ENCODE measurements at regions of chr16 and their contacts with region 1.

Region 1: GRCh38 chr16:31265329-31266245 is 5.8 kb downstream of the ITGAM start:
- DNase-seq: peak; percentile 91
- ATAC-seq: peak; percentile 97
- H3K4me3 Mint-ChIP-seq: peak overlapping the region; percentile 10
- H3K27ac Mint-ChIP-seq: peak overlapping the region; percentile 86
- H3K4me1 Mint-ChIP-seq: peaks cover 40% of the 10 kb centered on the region
- H3K27me3 Mint-ChIP-seq: peaks cover 6% of the 10 kb centered on the region

Region 2: GRCh38 chr16:31134625-31135547 is 130.7 kb before region 1 on chr16:
- CTCF ChIA-PET with region 1: no interaction called
- POLR2A ChIA-PET with region 1: no interaction called
- intact Hi-C with region 1: no loop called
- DNase-seq: no peak
- ATAC-seq: no peak
- H3K4me3 Mint-ChIP-seq: no peak overlapping the region
- H3K27ac Mint-ChIP-seq: no peak overlapping the region
- H3K4me1 Mint-ChIP-seq: no peaks in the 10 kb centered on the region
- H3K27me3 Mint-ChIP-seq: no peaks in the 10 kb centered on the region

Region 3: DNA sequence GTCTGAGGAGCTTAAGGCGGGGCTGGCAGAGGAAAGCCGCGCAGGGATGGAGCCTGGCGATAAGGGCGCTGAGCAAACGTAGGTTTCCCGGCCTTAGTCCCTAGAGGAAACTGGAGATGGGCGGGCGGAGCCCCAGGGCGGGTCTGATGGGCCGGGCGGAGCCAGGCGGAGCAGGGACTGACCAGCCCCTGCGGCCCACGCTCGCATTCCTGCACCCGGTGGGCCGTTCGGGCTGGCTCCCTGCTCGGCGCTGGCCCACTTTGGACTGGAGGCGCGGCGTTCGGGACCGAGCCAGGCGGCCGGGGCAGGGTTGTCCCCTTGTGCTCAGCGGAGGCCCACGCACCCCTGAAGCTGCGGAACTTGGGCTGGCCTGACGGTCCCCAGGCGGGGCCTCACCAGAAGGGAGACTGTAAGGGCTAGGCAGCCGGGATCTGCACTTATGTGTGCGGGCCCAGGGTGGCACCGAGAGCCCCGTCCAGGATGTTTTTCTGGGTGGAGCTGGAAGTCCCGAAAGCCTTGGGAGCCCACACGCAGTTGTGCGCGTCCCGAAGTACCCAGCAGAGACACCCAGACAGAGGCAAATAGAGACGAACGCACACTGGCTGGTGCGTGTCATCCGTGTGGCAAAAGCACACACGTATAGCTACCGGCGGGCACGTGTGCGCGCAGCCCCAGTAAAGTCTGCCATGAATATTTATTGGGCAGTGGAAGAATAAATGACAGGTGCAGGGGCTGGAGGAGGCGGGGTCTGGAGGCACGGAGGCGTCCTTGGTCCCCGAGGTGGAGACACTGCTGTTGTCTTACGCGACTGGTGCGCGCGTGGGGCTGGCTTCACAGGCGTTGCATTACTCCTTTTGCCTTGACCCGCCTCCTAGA is 50.1 kb before region 1 on chr16:
- CTCF ChIA-PET with region 1: no interaction called
- POLR2A ChIA-PET with region 1: no interaction called
- intact Hi-C with region 1: loop called in 1 of 2 experiments (anchors 10 kb)
- DNase-seq: peak; percentile 45
- ATAC-seq: peak; percentile 45
- H3K4me3 Mint-ChIP-seq: peak overlapping the region; percentile 52
- H3K27ac Mint-ChIP-seq: no peak overlapping the region
- H3K4me1 Mint-ChIP-seq: peaks cover 23% of the 10 kb centered on the region
- H3K27me3 Mint-ChIP-seq: peaks cover 44% of the 10 kb centered on the region

Region 4: GRCh38 chr16:31246296-31246695 is 19.3 kb before region 1 on chr16:
- CTCF ChIA-PET with region 1: no interaction called
- POLR2A ChIA-PET with region 1: no interaction called
- intact Hi-C with region 1: no loop called
- DNase-seq: no peak
- ATAC-seq: no peak
- H3K4me3 Mint-ChIP-seq: no peak overlapping the region
- H3K27ac Mint-ChIP-seq: no peak overlapping the region
- H3K4me1 Mint-ChIP-seq: peaks cover 11% of the 10 kb centered on the region
- H3K27me3 Mint-ChIP-seq: no peaks in the 10 kb centered on the region

Region 5: GRCh38 chr16:31354394-31355291 is 89.1 kb after region 1 on chr16 and contains the start of gene ITGAX:
- CTCF ChIA-PET with region 1: no interaction called
- POLR2A ChIA-PET with region 1: no interaction called
- intact Hi-C with region 1: loop called in 1 of 2 experiments (anchors 2 kb)
- DNase-seq: peak; percentile 91
- ATAC-seq: peak; percentile 86
- H3K4me3 Mint-ChIP-seq: peak within 1 kb of the TSS; percentile 12
- H3K27ac Mint-ChIP-seq: peak within 1 kb of the TSS; percentile 85
- H3K4me1 Mint-ChIP-seq: peaks cover 31% of the 10 kb centered on the region
- H3K27me3 Mint-ChIP-seq: peaks cover 8% of the 10 kb centered on the region
- total RNA-seq, gene ITGAX: 5.3 to 6.6 TPM

Region 6: GRCh38 chr16:31427441-31428278 is 162.1 kb after region 1 on chr16:
- CTCF ChIA-PET with region 1: no interaction called
- POLR2A ChIA-PET with region 1: no interaction called
- intact Hi-C with region 1: loop called in 1 of 2 experiments (anchors 10 kb)
- DNase-seq: peak; percentile 78
- ATAC-seq: peak; percentile 69
- H3K4me3 Mint-ChIP-seq: no peak overlapping the region
- H3K27ac Mint-ChIP-seq: no peak overlapping the region
- H3K4me1 Mint-ChIP-seq: peaks cover 8% of the 10 kb centered on the region
- H3K27me3 Mint-ChIP-seq: peaks cover 4% of the 10 kb centered on the region

Region 7: DNA sequence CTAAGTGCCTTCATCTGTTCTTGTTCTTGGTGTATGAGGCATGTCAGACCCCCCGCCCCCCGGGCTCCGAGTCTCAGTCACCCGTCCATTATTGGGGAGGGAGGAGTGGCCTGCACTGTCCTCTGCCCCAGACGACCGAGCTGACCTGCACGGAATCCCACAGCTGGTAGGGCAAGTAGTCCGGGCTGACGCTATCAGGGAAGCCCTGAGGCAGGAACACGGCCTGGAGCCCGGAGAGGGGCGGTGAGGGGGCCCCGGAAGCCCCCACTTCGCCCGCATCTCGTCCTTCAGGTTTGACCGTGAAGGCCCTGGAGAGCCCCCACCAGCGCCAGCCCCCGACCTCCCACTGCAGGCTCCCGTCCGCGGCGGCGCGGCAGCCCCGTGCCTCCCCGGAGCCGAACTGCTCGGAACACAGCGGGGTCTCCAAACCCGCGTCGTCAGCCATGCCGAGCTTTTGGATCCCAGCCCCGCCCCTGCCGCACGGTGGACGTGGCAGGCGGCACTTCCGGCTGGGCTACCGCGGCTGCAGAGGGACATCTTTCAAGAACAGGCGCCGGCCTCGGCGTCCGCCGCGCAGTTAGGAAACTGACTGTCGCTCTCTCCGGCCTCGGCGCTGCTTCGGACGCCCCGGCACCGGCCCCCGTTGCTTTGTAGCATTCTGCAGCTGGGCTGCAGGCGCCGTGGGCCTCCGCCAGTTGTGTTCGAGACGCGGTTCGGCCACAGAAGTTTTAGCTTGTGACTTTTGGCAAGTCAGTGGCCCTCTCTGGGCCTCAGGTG is 242.5 kb after region 1 on chr16 and contains the start of gene RUSF1:
- CTCF ChIA-PET with region 1: interaction called, 3 read pairs
- POLR2A ChIA-PET with region 1: interaction called, 14 read pairs
- intact Hi-C with region 1: no loop called
- DNase-seq: peak; percentile 94
- ATAC-seq: peak; percentile 77
- H3K4me3 Mint-ChIP-seq: peak within 1 kb of the TSS; percentile 88
- H3K27ac Mint-ChIP-seq: peak within 1 kb of the TSS; percentile 98
- H3K4me1 Mint-ChIP-seq: peaks cover 47% of the 10 kb centered on the region
- H3K27me3 Mint-ChIP-seq: no peaks in the 10 kb centered on the region
- total RNA-seq, gene RUSF1: 36.3 to 37.7 TPM